Ovary (tissue), 10 donors: ENCODE measurements at regions of chr6 and their contacts with region 1.

Region 1: DNA sequence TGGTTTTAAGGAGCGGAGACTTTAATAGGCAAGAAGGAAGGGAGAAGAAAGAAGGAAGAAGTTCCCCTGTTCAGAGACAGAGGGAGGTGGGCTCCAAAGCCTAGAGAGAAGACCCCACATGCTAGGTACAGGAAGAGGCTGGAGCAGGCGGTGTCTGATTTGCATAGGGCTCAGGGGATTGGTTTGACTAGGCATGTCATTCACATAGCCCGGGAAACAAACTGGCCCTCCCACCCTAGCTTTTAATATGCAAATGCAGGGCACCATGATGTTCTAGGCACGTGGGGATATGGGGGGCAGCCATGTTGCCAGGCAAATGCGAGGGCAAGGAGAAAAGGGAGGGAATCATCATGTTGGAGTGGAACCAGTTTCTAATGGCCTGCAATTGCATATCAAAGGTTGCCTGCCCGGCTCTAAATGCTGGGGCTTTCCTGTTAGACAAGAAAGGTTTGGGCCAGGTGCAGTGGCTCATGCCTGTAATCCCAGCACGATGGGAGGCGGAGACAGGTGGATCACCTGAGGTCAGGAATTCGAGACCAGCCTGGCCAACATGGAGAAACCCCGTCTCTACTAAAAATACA is 34.3 kb upstream of the AGPAT4 start:
- DNase-seq: no peak
- H3K4me3 ChIP-seq: no peak overlapping the region
- H3K27ac ChIP-seq: no peak overlapping the region
- H3K4me1 ChIP-seq: no peaks in the 10 kb centered on the region
- H3K27me3 ChIP-seq: no peaks in the 10 kb centered on the region
- CTCF ChIP-seq: no peak
- EP300 ChIP-seq: no peak
- POLR2A ChIP-seq: no peak

Region 2: GRCh38 chr6:160573943-160574342 is 734.2 kb before region 1 on chr6:
- intact Hi-C with region 1: loop called in 1 of 4 experiments (anchors 5 kb)
- DNase-seq: no peak
- H3K4me3 ChIP-seq: no peak overlapping the region
- H3K27ac ChIP-seq: no peak overlapping the region
- H3K4me1 ChIP-seq: no peaks in the 10 kb centered on the region
- H3K27me3 ChIP-seq: no peaks in the 10 kb centered on the region
- CTCF ChIP-seq: no peak
- EP300 ChIP-seq: no peak
- POLR2A ChIP-seq: no peak

Region 3: GRCh38 chr6:161327360-161327953 is 19.3 kb after region 1 on chr6:
- intact Hi-C with region 1: no loop called
- DNase-seq: no peak
- H3K4me3 ChIP-seq: no peak overlapping the region
- H3K27ac ChIP-seq: no peak overlapping the region
- H3K4me1 ChIP-seq: no peaks in the 10 kb centered on the region
- H3K27me3 ChIP-seq: no peaks in the 10 kb centered on the region
- CTCF ChIP-seq: no peak
- EP300 ChIP-seq: no peak
- POLR2A ChIP-seq: no peak